AG04449 (cell line): ENCODE measurements at regions of chr11 and their contacts with region 1.

Region 1: GRCh38 chr11:76770642-76771445 is 12.3 kb upstream of the TSKU start:
- DNase-seq: peak; percentile 94
- H3K4me3 ChIP-seq: no peak overlapping the region
- CTCF ChIP-seq: no peak

Region 2: GRCh38 chr11:76512851-76513653 is 257.8 kb before region 1 on chr11:
- CTCF ChIA-PET with region 1: no interaction called
- POLR2A ChIA-PET with region 1: no interaction called
- DNase-seq: no peak
- H3K4me3 ChIP-seq: no peak overlapping the region
- CTCF ChIP-seq: peak; percentile 22

Region 3: GRCh38 chr11:76750746-76751145 is 20.1 kb before region 1 on chr11:
- CTCF ChIA-PET with region 1: no interaction called
- POLR2A ChIA-PET with region 1: no interaction called
- DNase-seq: no peak
- H3K4me3 ChIP-seq: no peak overlapping the region
- CTCF ChIP-seq: no peak

Region 4: DNA sequence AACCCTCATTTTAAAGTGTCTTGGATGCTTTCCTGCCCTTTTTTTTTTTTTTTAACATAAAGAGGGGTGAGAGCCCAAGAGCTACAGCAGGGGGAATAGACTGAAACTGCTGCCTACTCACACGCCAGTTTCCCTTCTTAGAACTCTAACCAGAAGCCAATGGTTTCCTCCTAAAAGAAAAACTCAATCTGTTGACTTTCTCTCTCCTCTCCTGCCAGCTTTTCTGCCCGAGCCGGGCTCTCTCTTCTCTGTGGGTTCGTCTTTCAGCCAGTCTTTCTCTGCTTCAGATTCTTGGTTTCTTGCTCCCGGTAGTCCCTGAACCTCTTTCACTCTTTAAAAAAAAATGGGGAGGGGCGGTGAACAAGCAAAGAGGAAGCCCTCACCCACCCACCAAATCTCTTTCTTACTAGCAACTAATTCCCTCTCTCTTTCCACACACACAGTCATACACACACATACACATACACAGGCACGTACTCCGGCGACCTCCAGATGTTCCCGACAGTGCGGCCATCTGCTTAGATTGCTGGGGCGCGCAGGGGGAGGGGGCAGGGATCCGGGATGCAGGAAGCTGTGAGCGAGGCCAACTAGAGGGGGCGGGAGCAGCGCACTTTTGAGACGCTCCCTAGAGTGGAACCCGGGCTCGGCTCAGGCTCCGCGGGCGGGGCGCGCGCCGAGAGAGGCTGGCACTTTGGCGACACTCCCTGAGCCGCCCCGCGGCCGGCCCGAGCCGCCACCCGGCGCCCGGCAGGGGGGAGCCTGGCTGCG is 11.9 kb after region 1 on chr11:
- CTCF ChIA-PET with region 1: interaction called, 9 read pairs
- POLR2A ChIA-PET with region 1: interaction called, 15 read pairs
- DNase-seq: peak; percentile 74
- H3K4me3 ChIP-seq: peak overlapping the region; percentile 98
- CTCF ChIP-seq: no peak